ENCODE measurements at regions of chr21 and their contacts with region 1.

Region 1: GRCh38 chr21:42233067-42233961 is 14.4 kb downstream of the ABCG1 start:
- DNase-seq: peak; percentile 82
- CTCF ChIP-seq: no peak

Region 2: GRCh38 chr21:42164064-42164789 is 69.1 kb before region 1 on chr21:
- CTCF ChIA-PET with region 1: interaction called, 13 read pairs
- POLR2A ChIA-PET with region 1: no interaction called
- DNase-seq: peak; percentile 78
- CTCF ChIP-seq: peak; percentile 87

Region 3: GRCh38 chr21:42220138-42220701 is 13.1 kb before region 1 on chr21:
- CTCF ChIA-PET with region 1: interaction called, 12 read pairs
- POLR2A ChIA-PET with region 1: no interaction called
- DNase-seq: peak; percentile 63
- CTCF ChIP-seq: no peak

Region 4: GRCh38 chr21:42248783-42249597 is 15.7 kb after region 1 on chr21:
- CTCF ChIA-PET with region 1: interaction called, 15 read pairs
- POLR2A ChIA-PET with region 1: no interaction called
- DNase-seq: peak; percentile 79
- CTCF ChIP-seq: no peak